Left cardiac atrium (tissue), 4 donors: ENCODE measurements at regions of chr1 and their contacts with region 1.

Region 1: DNA sequence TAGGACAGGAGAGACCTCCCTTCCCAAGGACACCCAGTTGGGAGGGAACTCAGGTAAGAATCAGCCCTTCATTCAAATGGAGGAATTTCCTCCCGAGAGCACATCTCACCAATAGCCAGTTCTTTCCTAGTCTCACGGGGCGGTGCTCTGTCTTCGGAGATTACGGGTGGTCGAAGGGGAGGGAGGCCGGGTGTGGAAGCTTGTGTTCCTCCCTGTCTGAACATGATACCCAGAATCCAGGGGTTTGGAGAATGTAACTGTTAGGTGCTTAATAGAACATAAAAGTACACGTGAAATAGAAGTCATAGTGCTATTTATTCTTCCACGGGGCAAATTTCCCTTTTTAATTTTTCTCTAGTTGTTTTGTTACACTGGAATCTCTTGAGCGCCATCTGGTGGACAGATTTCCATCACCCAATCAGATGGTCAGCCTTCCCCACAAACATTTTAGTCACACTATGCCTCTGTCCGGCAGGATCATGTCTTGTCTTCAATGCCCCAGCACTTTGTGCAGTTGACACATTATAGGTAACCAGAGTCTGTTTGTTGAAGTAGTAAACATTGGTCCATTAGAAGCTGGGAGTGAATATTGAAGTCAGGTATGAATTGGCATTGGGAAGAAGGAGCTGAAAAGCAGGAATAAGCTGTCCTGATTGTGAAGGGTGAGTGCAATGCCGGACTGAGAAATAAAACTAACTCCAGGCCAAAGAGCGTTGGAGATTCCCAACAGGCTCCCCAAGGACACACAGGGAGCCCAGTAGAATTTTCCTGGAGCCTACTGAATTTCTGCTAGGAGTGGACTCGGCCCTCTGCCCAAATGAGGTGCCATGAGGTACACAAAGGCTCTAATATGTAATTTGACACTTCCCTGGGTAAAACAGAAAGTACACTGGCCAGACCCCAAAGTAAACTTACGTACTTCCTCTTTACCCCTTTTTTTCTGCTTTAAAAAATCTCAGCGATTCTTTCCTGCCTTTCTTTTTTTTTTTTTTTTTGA is 27.6 kb upstream of the ZNF697 start:
- DNase-seq: peak; percentile 84
- ATAC-seq: peak; percentile 74 to 87

Region 2: DNA sequence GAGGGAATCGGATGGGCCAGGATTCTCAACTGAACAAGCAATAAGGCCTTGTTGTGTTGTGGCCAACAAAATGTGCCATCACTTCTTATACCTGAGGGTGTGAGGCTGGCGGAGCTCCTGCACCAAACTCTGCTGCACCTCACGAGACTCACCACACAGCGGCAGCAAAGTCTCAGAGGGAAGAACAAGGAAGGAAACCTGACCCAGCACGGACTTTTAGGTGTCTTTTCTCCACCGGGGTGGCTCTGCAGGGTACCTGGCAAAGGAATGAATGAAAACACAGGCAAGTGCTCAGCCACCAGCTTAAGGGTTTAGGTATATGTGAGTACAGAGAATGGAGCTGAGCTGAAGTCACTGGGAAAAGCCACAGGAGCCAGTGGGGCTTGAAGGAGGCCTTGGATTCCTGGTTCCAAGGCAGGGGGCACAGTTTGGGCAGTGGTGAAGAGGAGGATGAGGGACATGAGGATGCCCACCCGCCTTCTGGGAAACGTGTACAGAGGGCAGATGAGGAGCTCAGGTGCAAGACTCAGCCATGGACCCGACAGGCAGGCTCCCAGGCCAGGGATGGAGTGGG is 199.7 kb before region 1 on chr1:
- intact Hi-C with region 1: loop called in 1 of 2 experiments (anchors 10 kb)
- DNase-seq: peak; percentile 31
- ATAC-seq: peak; percentile 61 to 77